ENCODE measurements at regions of chr2 and their contacts with region 1.

Region 1: GRCh38 chr2:10122386-10123280 is at the start of gene RRM2:
- DNase-seq: peak; percentile 81 to 87 (median 85)
- H3K4me3 ChIP-seq: peak within 1 kb of the TSS; percentile 32 to 50
- H3K4me3 Mint-ChIP-seq: peak within 1 kb of the TSS; percentile 89 to 99 (median 98)
- H3K27ac ChIP-seq: no peak within 1 kb of the TSS
- H3K27ac Mint-ChIP-seq: peak within 1 kb of the TSS; percentile 51 to 91 (median 58)
- H3K4me1 ChIP-seq: peaks cover 52% of the 10 kb centered on the region
- H3K4me1 Mint-ChIP-seq: peaks cover 32 to 56% (median 42%) of the 10 kb centered on the region in 4 donors
- H3K27me3 ChIP-seq: peaks cover 5% of the 10 kb centered on the region
- H3K27me3 Mint-ChIP-seq: peaks cover 5 to 12% of the 10 kb centered on the region in 2 donors
- total RNA-seq, gene RRM2: 0.42 TPM in 1 of 2 experiments, not detected in the other

Region 2: DNA sequence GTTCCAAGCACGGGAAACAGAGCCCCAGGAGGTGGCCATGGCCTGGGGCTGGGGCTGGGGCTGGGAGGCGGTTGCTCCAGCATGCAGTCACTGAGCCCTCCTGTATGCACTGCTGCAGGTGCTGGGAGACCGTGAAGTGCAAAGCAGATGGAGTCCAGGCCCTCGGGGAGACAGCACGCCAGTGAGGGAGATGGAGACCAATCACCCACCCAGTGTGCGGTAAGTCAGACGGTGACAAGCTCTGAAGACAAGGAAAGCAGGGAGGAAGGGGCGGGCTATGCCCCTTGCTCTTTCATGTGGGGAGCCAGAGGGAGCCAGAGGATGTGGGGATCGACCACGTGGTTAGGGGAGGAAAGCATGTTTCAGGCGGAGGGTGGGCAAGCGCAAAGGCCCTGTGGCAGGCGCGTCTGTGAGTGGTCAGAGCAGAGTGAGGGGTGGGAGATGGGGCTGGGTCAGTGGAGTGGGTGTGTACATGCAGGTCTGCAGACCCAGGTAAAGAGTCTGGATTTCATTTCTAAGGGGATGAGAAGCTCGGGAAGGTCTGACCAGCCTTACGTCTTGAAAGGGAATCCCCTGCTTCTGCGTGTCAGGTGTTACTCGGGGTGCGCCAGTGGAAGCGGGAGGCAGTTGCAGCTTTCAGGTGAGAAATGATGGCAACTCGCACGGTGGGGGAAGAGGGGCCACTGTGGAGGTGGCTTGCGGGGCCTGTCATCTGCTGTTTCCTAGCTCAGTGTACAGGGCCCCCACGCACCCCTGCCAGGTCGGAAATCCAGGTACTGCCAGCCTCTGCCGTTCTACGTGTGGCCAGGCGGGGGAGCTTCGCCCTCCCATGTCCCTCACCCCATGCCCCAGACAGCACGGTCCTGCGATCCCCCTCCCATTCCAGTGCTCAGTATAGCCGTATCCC is 19.4 kb after region 1 on chr2:
- CTCF ChIA-PET with region 1: interaction called, 23 read pairs
- POLR2A ChIA-PET with region 1: interaction called, 10 read pairs
- intact Hi-C with region 1: no loop called
- DNase-seq: peak; percentile 40 to 56 (median 47)
- H3K4me3 ChIP-seq: no peak overlapping the region
- H3K4me3 Mint-ChIP-seq: peak overlapping the region in 6 of 8 donors; percentile 32 to 75 (median 64)
- H3K27ac ChIP-seq: no peak overlapping the region
- H3K27ac Mint-ChIP-seq: peak overlapping the region; percentile 4 to 81 (median 70)
- H3K4me1 ChIP-seq: peaks cover 20% of the 10 kb centered on the region
- H3K4me1 Mint-ChIP-seq: peaks cover 16 to 27% (median 19%) of the 10 kb centered on the region in 4 donors
- H3K27me3 ChIP-seq: no peaks in the 10 kb centered on the region
- H3K27me3 Mint-ChIP-seq: no peaks in the 10 kb centered on the region

Region 3: GRCh38 chr2:10179422-10179821 is 56.8 kb after region 1 on chr2:
- CTCF ChIA-PET with region 1: no interaction called
- POLR2A ChIA-PET with region 1: no interaction called
- intact Hi-C with region 1: no loop called
- DNase-seq: no peak
- H3K4me3 ChIP-seq: no peak overlapping the region
- H3K4me3 Mint-ChIP-seq: no peak overlapping the region
- H3K27ac ChIP-seq: no peak overlapping the region
- H3K27ac Mint-ChIP-seq: no peak overlapping the region
- H3K4me1 ChIP-seq: no peaks in the 10 kb centered on the region
- H3K4me1 Mint-ChIP-seq: no peaks in the 10 kb centered on the region
- H3K27me3 ChIP-seq: no peaks in the 10 kb centered on the region
- H3K27me3 Mint-ChIP-seq: no peaks in the 10 kb centered on the region

Region 4: GRCh38 chr2:10302479-10303180 is 180.0 kb after region 1 on chr2 and contains the start of gene HPCAL1:
- CTCF ChIA-PET with region 1: interaction called, 10 read pairs
- POLR2A ChIA-PET with region 1: interaction called, 3 read pairs
- intact Hi-C with region 1: loop called (anchors 1 kb)
- DNase-seq: peak; percentile 79 to 88 (median 85)
- H3K4me3 ChIP-seq: peak within 1 kb of the TSS; percentile 75 to 77
- H3K4me3 Mint-ChIP-seq: peak within 1 kb of the TSS; percentile 97 to 100 (median 98)
- H3K27ac ChIP-seq: peak within 1 kb of the TSS; percentile 65
- H3K27ac Mint-ChIP-seq: peak within 1 kb of the TSS; percentile 87 to 96 (median 94)
- H3K4me1 ChIP-seq: peaks cover 66% of the 10 kb centered on the region
- H3K4me1 Mint-ChIP-seq: peaks cover 56 to 86% (median 72%) of the 10 kb centered on the region in 4 donors
- H3K27me3 ChIP-seq: no peaks in the 10 kb centered on the region
- H3K27me3 Mint-ChIP-seq: no peaks in the 10 kb centered on the region
- total RNA-seq, gene HPCAL1: 77.1 to 80.7 TPM

Region 5: DNA sequence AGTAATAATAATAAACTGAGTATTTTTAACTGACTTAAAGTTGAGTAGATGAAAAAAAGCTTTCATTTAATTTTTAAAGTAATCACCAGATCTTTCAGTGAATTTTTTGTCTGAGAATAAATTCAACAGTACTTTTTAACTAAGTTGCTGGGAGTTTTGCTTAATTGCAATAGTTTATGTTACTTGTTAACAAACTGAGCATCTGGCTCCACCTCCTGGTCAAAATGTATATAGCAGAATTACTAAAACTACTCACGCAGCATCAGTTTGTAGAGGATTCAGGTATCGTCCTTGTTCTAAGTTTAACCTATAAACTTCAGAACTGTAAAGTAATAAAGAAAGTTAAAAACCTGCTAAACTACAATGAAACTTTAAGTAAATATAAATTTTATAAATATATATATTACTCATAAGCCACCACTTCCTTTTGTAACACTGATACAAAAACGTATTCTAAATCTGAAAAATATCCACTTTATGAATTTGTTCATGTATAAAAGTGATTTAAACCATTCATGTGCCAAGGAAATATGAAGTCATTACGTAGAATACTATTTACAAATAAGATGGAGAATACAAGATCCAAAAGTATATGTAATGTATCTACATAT is 545.9 kb after region 1 on chr2:
- CTCF ChIA-PET with region 1: interaction called, 4 read pairs
- POLR2A ChIA-PET with region 1: no interaction called
- intact Hi-C with region 1: loop called (anchors 1 kb)
- DNase-seq: peak; percentile 43 to 63 (median 60)
- H3K4me3 ChIP-seq: no peak overlapping the region
- H3K4me3 Mint-ChIP-seq: no peak overlapping the region
- H3K27ac ChIP-seq: no peak overlapping the region
- H3K27ac Mint-ChIP-seq: no peak overlapping the region
- H3K4me1 ChIP-seq: no peaks in the 10 kb centered on the region
- H3K4me1 Mint-ChIP-seq: peaks cover 0 to 4% (median under 1%) of the 10 kb centered on the region in 4 donors
- H3K27me3 ChIP-seq: no peaks in the 10 kb centered on the region
- H3K27me3 Mint-ChIP-seq: no peaks in the 10 kb centered on the region